Heart left ventricle (tissue), 16 donors: ENCODE measurements at regions of chr7 and their contacts with region 1.

Region 1: GRCh38 chr7:34759452-34760125 is 101.6 kb downstream of the NPSR1 start:
- DNase-seq: no peak
- ATAC-seq: peak in 3 of 4 donors; percentile 50 to 70 (median 50)
- H3K4me3 ChIP-seq: no peak overlapping the region
- H3K27ac ChIP-seq: no peak overlapping the region
- H3K4me1 ChIP-seq: no peaks in the 10 kb centered on the region
- H3K27me3 ChIP-seq: no peaks in the 10 kb centered on the region
- CTCF ChIP-seq: peak; percentile 25 to 59 (median 46)
- POLR2A ChIP-seq: no peak

Region 2: GRCh38 chr7:34373940-34374339 is 385.6 kb before region 1 on chr7:
- intact Hi-C with region 1: no loop called
- DNase-seq: no peak
- ATAC-seq: no peak
- H3K4me3 ChIP-seq: no peak overlapping the region
- H3K27ac ChIP-seq: no peak overlapping the region
- H3K4me1 ChIP-seq: no peaks in the 10 kb centered on the region
- H3K27me3 ChIP-seq: no peaks in the 10 kb centered on the region
- CTCF ChIP-seq: no peak
- POLR2A ChIP-seq: no peak

Region 3: GRCh38 chr7:34875481-34875880 is 115.9 kb after region 1 on chr7:
- intact Hi-C with region 1: no loop called
- DNase-seq: no peak
- ATAC-seq: no peak
- H3K4me3 ChIP-seq: no peak overlapping the region
- H3K27ac ChIP-seq: no peak overlapping the region
- H3K4me1 ChIP-seq: no peaks in the 10 kb centered on the region
- H3K27me3 ChIP-seq: no peaks in the 10 kb centered on the region
- CTCF ChIP-seq: no peak
- POLR2A ChIP-seq: no peak

Region 4: DNA sequence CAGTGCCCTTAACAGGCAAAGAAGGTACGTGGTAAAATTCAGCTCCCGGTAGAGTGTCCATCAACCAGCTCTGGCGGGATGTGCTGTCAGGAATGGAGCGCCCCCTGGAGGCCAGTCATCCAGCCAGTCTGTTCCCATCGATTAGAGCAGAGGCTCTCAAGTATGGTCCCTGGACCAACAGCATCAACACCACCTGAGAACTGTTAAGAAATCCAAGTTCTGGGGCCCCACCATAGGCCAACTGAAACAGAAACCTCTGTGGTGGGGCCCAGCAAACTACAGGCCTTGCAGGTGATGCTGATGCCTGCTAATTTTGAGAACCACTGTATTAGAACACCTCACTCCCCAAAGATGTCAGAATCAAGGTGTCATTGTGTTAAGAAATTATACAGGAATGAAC is 168.5 kb after region 1 on chr7:
- intact Hi-C with region 1: loop called in 1 of 10 experiments (anchors 10 kb)
- DNase-seq: peak in 4 of 5 donors; percentile 9 to 62 (median 36)
- ATAC-seq: peak in 1 of 4 donors; percentile 36
- H3K4me3 ChIP-seq: no peak overlapping the region
- H3K27ac ChIP-seq: no peak overlapping the region
- H3K4me1 ChIP-seq: no peaks in the 10 kb centered on the region
- H3K27me3 ChIP-seq: no peaks in the 10 kb centered on the region
- CTCF ChIP-seq: peak; percentile 18 to 56 (median 34)
- POLR2A ChIP-seq: no peak